ENCODE measurements at regions of chr5 and their contacts with region 1.

Region 1: DNA sequence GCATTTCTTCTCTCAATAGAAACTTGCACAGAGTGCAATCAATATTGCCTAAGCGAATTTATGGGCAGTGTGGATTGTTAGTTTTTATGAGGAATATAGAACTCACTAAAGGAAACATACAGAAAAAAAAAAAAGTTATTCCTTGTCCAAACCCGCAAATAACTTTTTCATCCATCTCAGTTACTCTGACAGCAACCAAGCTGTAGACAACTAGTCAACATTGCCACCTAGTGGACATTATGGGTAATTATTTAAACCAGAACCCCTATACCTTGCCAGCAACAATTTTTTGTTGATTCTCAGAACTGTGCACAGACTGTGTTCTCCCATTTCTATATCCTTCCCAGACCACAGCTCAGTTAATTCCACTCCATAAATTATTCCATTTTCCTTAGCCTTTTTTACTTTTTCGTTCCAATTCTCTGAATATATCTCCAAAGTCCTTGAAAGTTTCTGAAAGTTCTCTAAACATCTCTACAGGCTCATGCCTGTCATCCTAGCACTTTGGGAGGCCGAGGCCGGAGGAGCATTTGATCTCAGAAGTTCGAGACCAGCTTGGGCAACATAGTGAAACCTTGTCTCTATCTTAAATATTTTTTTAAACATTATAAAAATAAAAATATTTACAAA is 2.6 kb upstream of the AFAP1L1 start:
- DNase-seq: no peak
- ATAC-seq: peak; percentile 52
- H3K4me3 Mint-ChIP-seq: no peak overlapping the region
- H3K27ac Mint-ChIP-seq: no peak overlapping the region
- H3K4me1 Mint-ChIP-seq: peaks cover 6% of the 10 kb centered on the region
- H3K27me3 Mint-ChIP-seq: peaks cover 24% of the 10 kb centered on the region
- CTCF ChIP-seq: peak; percentile 97

Region 2: GRCh38 chr5:149135536-149136201 is 133.4 kb before region 1 on chr5:
- CTCF ChIA-PET with region 1: interaction called, 39 read pairs
- POLR2A ChIA-PET with region 1: no interaction called
- intact Hi-C with region 1: loop called (anchors 2 kb)
- DNase-seq: no peak
- ATAC-seq: no peak
- H3K4me3 Mint-ChIP-seq: no peak overlapping the region
- H3K27ac Mint-ChIP-seq: no peak overlapping the region
- H3K4me1 Mint-ChIP-seq: no peaks in the 10 kb centered on the region
- H3K27me3 Mint-ChIP-seq: peaks cover 11% of the 10 kb centered on the region
- CTCF ChIP-seq: no peak

Region 3: GRCh38 chr5:149280124-149280523 is 11.1 kb after region 1 on chr5:
- CTCF ChIA-PET with region 1: interaction called, 14 read pairs
- POLR2A ChIA-PET with region 1: no interaction called
- intact Hi-C with region 1: no loop called
- DNase-seq: no peak
- ATAC-seq: no peak
- H3K4me3 Mint-ChIP-seq: no peak overlapping the region
- H3K27ac Mint-ChIP-seq: no peak overlapping the region
- H3K4me1 Mint-ChIP-seq: no peaks in the 10 kb centered on the region
- H3K27me3 Mint-ChIP-seq: no peaks in the 10 kb centered on the region
- CTCF ChIP-seq: no peak